ENCODE measurements at regions of chr1 and their contacts with region 1.

Region 1: DNA sequence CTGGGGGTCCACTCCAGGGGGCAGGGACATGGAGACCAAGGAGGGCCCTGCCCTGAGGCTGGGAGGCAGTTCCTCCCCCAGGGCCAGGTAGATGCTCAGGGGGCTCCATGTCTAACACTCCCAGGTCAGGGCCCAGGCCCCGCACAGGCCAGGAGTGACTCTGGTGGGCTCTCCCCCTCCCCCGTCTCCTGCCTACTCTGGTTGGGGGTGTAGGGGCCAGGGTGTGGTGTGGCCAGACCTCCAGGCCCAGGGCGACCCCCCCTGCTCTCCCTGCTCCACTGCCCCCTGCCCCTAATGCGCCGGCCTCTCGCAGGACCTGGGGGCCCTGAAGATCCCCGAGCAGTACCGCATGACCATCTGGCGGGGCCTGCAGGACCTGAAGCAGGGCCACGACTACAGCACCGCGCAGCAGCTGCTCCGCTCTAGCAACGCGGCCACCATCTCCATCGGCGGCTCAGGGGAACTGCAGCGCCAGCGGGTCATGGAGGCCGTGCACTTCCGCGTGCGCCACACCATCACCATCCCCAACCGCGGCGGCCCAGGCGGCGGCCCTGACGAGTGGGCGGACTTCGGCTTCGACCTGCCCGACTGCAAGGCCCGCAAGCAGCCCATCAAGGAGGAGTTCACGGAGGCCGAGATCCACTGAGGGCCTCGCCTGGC is 19.7 kb upstream of the CCDC27 start:
- DNase-seq: no peak
- ATAC-seq: peak; percentile 23 to 25
- H3K4me3 ChIP-seq: no peak overlapping the region
- H3K27ac ChIP-seq: no peak overlapping the region
- H3K4me1 ChIP-seq: no peaks in the 10 kb centered on the region
- H3K27me3 ChIP-seq: no peaks in the 10 kb centered on the region

Region 2: DNA sequence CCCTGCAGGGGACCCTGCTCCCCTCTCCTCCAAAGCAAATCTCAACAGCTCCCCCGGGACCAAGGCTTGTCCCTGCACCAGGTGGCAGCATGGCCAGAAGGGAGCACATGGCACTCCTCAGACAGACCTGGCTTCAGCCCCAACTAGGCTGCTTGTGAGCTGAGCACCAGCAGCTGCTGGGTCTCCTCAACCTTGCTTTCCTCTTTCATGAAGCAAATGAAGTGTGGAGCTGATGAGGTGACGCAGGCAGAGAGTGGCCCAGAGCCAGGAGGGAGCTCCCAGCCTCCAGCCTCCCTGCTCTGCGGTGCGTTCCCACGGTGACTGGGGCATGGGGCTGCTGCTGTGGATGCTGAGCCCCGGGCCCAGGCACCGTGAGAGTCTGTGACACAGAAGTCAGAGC is 155.3 kb before region 1 on chr1:
- intact Hi-C with region 1: loop called in 1 of 4 experiments (anchors 10 kb)
- DNase-seq: no peak
- ATAC-seq: peak; percentile 25
- H3K4me3 ChIP-seq: no peak overlapping the region
- H3K27ac ChIP-seq: no peak overlapping the region
- H3K4me1 ChIP-seq: no peaks in the 10 kb centered on the region
- H3K27me3 ChIP-seq: no peaks in the 10 kb centered on the region